PC-9 (cell line): ENCODE measurements at regions of chr15 and their contacts with region 1.

Region 1: GRCh38 chr15:74202452-74203428 is at the start of gene STRA6:
- DNase-seq: peak; percentile 86 to 91
- H3K4me3 ChIP-seq: peak within 1 kb of the TSS; percentile 73
- H3K27ac ChIP-seq: peak within 1 kb of the TSS; percentile 95
- H3K4me1 ChIP-seq: peaks cover 79% of the 10 kb centered on the region
- H3K27me3 ChIP-seq: no peaks in the 10 kb centered on the region
- CTCF ChIP-seq: peak; percentile 39; the same call in 1 of the 2 replicates
- total RNA-seq, gene STRA6: 64.9 and 83.6 TPM in 2 replicates

Region 2: GRCh38 chr15:73856458-73857192 is 346.1 kb before region 1 on chr15:
- CTCF ChIA-PET with region 1: no interaction called
- POLR2A ChIA-PET with region 1: no interaction called
- intact Hi-C with region 1: no loop called
- DNase-seq: no peak
- H3K4me3 ChIP-seq: no peak overlapping the region
- H3K27ac ChIP-seq: no peak overlapping the region
- H3K4me1 ChIP-seq: no peaks in the 10 kb centered on the region
- H3K27me3 ChIP-seq: peaks cover 87% of the 10 kb centered on the region
- CTCF ChIP-seq: no peak

Region 3: GRCh38 chr15:74136814-74137536 is 65.8 kb before region 1 on chr15:
- CTCF ChIA-PET with region 1: no interaction called
- POLR2A ChIA-PET with region 1: no interaction called
- intact Hi-C with region 1: loop called (anchors 2 kb)
- DNase-seq: no peak
- H3K4me3 ChIP-seq: peak overlapping the region; percentile 70
- H3K27ac ChIP-seq: peak overlapping the region; percentile 74
- H3K4me1 ChIP-seq: peaks cover 20% of the 10 kb centered on the region
- H3K27me3 ChIP-seq: no peaks in the 10 kb centered on the region
- CTCF ChIP-seq: no peak

Region 4: DNA sequence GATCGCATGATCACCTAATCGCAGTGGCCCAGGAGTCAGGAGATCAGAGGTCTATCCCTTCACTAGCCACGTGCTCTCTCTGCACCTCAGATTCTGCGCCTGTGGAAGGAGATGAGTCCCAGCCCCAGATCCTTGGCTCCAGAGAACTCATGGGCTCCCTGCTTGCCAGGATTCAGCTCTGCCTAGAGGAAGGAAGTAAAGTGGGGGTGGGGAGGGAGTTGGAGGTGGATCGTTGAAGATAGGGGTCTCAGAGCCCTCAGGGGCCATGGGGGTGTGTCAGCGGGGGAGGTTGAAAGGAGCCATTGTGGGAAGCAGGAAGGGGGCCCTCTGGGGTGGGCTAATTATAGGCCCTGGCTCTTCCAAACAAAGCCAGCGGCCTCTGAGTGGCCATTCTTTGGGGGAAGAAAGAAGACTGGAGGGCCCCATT is 11.1 kb after region 1 on chr15:
- CTCF ChIA-PET with region 1: interaction called, 3 read pairs
- POLR2A ChIA-PET with region 1: interaction called, 6 read pairs
- intact Hi-C with region 1: loop called (anchors 2 kb)
- DNase-seq: no peak
- H3K4me3 ChIP-seq: no peak overlapping the region
- H3K27ac ChIP-seq: peak overlapping the region; percentile 88
- H3K4me1 ChIP-seq: peaks cover 69% of the 10 kb centered on the region
- H3K27me3 ChIP-seq: no peaks in the 10 kb centered on the region
- CTCF ChIP-seq: no peak

Region 5: GRCh38 chr15:74240002-74240568 is 37.3 kb after region 1 on chr15:
- CTCF ChIA-PET with region 1: interaction called, 4 read pairs
- POLR2A ChIA-PET with region 1: interaction called, 6 read pairs
- intact Hi-C with region 1: loop called (anchors 1 kb)
- DNase-seq: peak; percentile 96 to 97
- H3K4me3 ChIP-seq: no peak overlapping the region
- H3K27ac ChIP-seq: peak overlapping the region; percentile 63; the same call in 1 of the 2 replicates
- H3K4me1 ChIP-seq: peaks cover 67% of the 10 kb centered on the region
- H3K27me3 ChIP-seq: no peaks in the 10 kb centered on the region
- CTCF ChIP-seq: peak; percentile 68

Region 6: DNA sequence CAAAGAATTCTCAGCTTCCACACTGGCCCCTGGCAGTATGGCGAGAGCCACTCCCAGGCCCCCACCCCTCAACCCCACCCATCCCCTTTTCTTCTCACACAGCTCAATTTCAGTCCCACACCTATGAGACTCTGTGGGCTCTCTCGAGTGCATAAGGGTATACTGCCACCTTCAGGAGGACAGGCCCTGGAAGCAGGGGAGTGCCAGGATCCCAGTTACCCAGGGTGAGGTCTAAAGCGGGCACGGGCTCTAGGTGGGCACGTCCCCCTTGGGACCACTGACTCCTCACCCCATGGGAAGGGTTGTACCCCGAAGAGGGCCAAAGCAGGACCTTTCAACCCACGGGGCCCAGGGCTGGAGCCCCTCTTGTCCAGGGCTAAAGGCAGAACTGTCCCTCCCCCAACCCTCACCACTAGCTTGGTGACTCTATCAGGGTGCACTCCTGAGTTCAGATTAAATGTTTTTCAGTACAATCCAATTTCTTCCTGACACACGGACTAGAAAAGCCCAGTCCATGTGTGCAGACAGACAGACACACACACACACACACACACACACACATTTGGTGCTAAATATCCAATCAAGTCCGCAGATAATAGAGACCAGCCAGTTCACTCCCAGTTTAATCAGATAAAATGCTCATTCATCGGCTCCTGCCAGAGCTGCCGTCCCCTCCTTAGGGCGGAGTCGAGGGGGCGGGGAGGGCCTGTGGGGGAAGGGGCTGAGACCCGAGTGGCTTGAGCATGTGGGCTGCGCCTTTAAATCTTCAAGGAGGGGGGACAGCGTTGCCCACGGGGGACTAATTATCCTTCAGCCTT is 105.3 kb after region 1 on chr15:
- CTCF ChIA-PET with region 1: interaction called, 3 read pairs
- POLR2A ChIA-PET with region 1: no interaction called
- intact Hi-C with region 1: loop called (anchors 2 kb)
- DNase-seq: peak; percentile 59 to 68
- H3K4me3 ChIP-seq: no peak overlapping the region
- H3K27ac ChIP-seq: no peak overlapping the region
- H3K4me1 ChIP-seq: peaks cover 6% of the 10 kb centered on the region; the same call in 1 of the 2 replicates
- H3K27me3 ChIP-seq: no peaks in the 10 kb centered on the region
- CTCF ChIP-seq: peak; percentile 84